A673 (cell line): ENCODE measurements at regions of chr17 and their contacts with region 1.

Region 1: DNA sequence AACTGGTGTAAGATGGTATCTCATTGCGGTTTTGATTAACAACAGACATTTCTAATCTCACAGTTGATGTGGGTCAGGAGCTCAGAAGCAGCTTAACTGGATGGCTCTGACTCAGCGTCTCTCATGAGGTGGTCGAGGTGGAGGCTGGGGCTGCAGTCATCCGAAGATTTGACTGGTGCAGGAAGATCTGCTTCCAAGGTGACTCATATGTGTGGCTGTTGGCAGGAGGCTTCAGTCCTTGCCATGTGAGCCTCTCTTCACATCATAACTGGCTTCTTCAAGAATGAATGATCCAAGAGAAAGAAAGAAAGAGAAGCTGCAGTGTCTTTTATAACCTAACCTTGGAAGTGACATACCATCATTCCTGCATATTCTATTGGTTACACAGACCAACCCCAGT is 376.1 kb downstream of the SEC14L1 start:
- DNase-seq: no peak
- H3K4me3 ChIP-seq: no peak overlapping the region
- H3K27ac ChIP-seq: no peak overlapping the region
- H3K4me1 ChIP-seq: no peaks in the 10 kb centered on the region
- H3K27me3 ChIP-seq: no peaks in the 10 kb centered on the region
- CTCF ChIP-seq: no peak

Region 2: DNA sequence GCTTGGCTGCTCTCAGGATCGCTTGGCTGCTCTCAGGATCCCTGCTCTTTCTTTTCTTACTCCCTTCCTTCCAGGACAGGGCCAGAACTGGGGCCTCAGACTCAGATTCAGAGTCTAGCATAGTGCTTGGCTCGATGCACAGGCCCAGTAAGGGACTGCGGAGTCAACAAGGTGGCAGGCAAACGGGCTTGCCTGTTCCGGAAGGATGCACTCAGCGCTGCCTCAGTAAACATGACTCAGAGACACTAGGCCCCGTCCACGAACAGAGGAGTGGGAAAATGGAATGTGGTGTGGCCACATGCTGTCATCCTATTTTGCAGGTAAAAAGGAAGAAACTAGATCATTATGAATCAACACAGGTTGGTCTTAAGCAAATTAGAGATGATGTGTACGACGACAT is 1122.7 kb before region 1 on chr17:
- CTCF ChIA-PET with region 1: interaction called, 14 read pairs
- POLR2A ChIA-PET with region 1: no interaction called
- intact Hi-C with region 1: no loop called
- DNase-seq: no peak
- H3K4me3 ChIP-seq: no peak overlapping the region
- H3K27ac ChIP-seq: no peak overlapping the region
- H3K4me1 ChIP-seq: no peaks in the 10 kb centered on the region
- H3K27me3 ChIP-seq: no peaks in the 10 kb centered on the region
- CTCF ChIP-seq: no peak

Region 3: DNA sequence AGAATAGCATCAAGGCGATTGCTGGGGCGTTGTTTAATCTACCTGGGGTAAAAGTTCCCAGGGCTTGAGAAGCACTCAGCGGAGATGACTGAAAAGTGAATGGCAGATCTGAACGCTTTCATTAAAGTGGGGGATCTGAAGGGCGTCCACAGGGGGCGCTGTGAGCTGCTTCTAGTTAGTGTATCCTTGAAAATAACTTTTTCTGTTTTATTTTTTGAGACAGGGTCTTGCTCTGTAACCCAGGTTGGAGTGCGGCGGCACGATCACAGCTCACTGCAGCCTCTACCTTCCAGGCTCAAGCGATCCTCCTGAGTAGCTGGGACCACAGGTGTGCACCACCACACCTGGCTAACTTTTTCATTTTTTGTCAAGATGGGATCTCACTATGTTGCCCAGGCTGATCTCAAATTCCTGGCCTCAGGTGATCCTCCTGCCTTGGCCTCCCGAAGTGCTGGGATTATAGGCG is 15.8 kb before region 1 on chr17:
- CTCF ChIA-PET with region 1: no interaction called
- POLR2A ChIA-PET with region 1: no interaction called
- intact Hi-C with region 1: no loop called
- DNase-seq: no peak
- H3K4me3 ChIP-seq: no peak overlapping the region
- H3K27ac ChIP-seq: no peak overlapping the region
- H3K4me1 ChIP-seq: no peaks in the 10 kb centered on the region
- H3K27me3 ChIP-seq: no peaks in the 10 kb centered on the region
- CTCF ChIP-seq: no peak

Region 4: DNA sequence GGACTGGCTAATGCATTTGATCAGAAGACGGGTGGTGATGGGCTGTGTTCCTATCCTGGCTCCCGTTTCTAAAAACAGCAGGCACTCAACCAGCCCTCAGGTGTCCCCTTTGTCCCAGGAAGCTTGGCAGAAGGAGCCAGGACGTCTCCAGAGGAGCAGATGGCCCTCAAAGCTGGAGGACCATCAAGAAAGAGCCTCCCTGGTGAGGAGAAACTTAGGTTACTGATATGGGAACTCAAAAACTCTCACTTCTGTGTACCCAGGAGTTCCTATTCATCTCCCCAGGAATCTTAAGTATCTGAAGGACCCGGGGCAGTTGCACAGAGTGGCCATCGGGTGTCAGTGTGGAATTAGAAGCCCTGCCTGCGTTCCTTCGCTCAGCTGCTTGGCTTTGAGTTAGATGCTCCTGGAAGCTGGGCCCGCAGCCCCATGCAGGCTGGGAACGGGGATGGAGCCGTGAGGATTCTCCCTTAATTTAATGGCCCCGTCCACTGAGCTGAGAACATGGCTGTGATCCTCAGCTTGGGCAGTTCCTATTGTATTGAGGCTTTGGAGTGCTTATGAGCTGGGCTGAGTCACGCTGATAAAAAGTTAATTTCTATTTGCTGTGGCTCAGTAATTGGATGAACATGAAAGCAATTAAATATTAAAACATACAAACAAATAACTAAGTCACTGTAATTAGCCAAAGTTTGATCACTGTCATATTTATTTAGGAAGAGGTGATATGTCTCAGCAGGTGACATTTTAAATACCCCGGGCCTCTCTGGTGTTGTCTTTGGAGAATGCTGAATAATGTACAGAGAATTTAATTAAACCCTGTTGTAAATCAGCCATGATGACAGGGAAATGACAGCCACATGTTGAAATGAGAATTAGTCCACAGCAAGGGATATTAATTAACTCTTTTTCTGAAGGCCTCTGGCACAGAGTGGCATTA is 25.9 kb after region 1 on chr17:
- CTCF ChIA-PET with region 1: no interaction called
- POLR2A ChIA-PET with region 1: no interaction called
- intact Hi-C with region 1: no loop called
- DNase-seq: peak; percentile 92
- H3K4me3 ChIP-seq: no peak overlapping the region
- H3K27ac ChIP-seq: no peak overlapping the region
- H3K4me1 ChIP-seq: peaks cover 25% of the 10 kb centered on the region
- H3K27me3 ChIP-seq: no peaks in the 10 kb centered on the region
- CTCF ChIP-seq: peak; percentile 95